Dendritic cell treated with granulocyte-macrophage colony-stimulating factor and Interleukin-4, amounts not matched to agents 40 ng/mL and 50 ng/mL, for 4 days (primary cell): ENCODE measurements at regions of chr4 and their contacts with region 1.

Region 1: GRCh38 chr4:15238720-15239119 is 189.1 kb upstream of the C1QTNF7 start:
- H3K4me3 Mint-ChIP-seq: no peak overlapping the region
- H3K27ac Mint-ChIP-seq: no peak overlapping the region
- H3K4me1 Mint-ChIP-seq: peaks cover 18% of the 10 kb centered on the region
- H3K27me3 Mint-ChIP-seq: no peaks in the 10 kb centered on the region

Region 2: GRCh38 chr4:15396157-15396800 is 157.6 kb after region 1 on chr4:
- intact Hi-C with region 1: loop called (anchors 1 kb)
- H3K4me3 Mint-ChIP-seq: no peak overlapping the region
- H3K27ac Mint-ChIP-seq: no peak overlapping the region
- H3K4me1 Mint-ChIP-seq: peaks cover 36% of the 10 kb centered on the region
- H3K27me3 Mint-ChIP-seq: no peaks in the 10 kb centered on the region

Region 3: DNA sequence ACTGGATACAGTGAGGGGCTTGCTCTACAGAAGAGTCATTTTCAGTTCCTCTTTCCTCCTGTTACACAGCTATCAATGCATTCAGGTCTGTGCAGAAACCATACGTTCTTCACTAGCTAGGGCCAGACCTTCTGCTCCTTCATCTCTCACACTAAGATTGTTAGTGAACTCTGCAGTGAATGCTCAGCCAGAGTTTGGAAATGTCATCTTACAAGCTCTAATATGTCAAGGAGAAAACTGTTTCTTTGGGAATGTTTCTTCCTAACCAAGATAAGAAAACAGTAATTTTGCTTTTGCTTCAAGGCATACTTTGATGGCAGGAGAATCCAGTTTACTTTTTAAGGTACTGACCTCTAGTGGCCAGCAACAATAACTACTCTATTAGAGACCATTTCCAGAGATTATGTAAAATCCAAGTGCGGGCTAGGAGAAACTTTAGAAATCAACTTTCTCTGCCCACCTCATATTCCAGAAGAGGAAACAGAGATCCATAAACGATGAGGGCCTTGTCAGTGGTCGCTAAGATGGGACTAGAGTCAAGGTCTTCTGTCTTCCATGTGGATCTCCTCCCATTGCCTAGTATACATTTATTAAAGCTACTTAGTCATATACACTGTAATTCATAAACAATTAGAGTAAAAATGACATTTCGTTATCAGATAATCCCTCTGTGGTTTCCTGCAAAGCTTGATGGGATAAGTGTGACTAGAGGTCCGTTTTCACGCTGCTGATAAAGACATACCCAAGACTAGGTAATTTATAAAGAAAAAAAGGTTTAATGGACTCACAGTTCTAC is 218.9 kb after region 1 on chr4:
- intact Hi-C with region 1: loop called (anchors 1 kb)
- H3K4me3 Mint-ChIP-seq: no peak overlapping the region
- H3K27ac Mint-ChIP-seq: no peak overlapping the region
- H3K4me1 Mint-ChIP-seq: peaks cover 29% of the 10 kb centered on the region
- H3K27me3 Mint-ChIP-seq: no peaks in the 10 kb centered on the region

Region 4: GRCh38 chr4:15649914-15650545 is 411.3 kb after region 1 on chr4:
- intact Hi-C with region 1: loop called (anchors 5 kb)
- H3K4me3 Mint-ChIP-seq: peak overlapping the region; percentile 13
- H3K27ac Mint-ChIP-seq: no peak overlapping the region
- H3K4me1 Mint-ChIP-seq: peaks cover 48% of the 10 kb centered on the region
- H3K27me3 Mint-ChIP-seq: no peaks in the 10 kb centered on the region